Posterior cingulate gyrus (tissue), 11 donors: ENCODE measurements at regions of chr14 and their contacts with region 1.

Region 1: GRCh38 chr14:45253068-45253753 is at the start of gene MIS18BP1:
- DNase-seq: peak; percentile 69 to 98 (median 88)

Region 2: DNA sequence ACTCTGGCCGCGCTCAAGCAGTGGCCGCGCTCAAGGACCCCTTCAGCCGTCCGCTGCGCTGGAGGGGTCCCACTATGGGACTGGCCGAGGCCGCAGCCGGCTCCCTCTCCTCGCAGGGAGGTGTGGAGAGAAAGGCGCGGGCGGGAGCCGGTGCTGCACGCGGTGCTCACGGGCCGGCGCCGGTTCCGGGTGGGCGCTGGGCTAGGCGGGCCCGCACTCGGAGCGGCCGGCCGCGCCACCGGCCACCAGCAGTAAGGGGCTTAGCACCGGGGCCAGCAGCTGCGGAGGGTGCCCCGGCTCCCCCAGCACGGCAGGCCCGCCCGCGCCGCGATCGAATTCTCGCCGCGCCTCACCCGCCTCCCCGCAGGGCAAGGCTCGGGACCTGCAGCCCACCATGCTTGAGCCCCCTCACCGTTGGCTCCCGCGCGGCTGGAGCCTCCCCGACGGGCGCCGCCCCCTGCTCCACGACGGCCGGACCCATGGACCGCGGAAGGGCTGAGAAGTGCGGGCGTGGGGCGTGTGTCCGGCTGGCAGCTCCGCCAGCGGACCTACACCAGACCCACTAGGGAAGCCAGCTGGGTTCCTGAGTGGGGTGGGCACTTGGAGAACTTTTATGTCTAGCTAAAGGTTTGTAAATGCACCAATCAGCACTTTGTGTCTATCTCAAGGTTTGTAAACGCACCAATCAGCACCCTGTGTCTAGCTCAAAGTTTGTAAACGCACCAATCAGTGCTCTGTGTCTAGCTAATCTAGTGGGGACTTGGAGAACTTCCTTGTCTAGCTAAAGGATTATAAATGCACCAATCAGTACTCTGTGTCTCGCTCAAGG is 341.0 kb before region 1 on chr14:
- intact Hi-C with region 1: loop called (anchors 5 kb)
- DNase-seq: peak in 2 of 10 donors; percentile 74 to 80

Region 3: GRCh38 chr14:45083971-45084722 is 169.1 kb before region 1 on chr14 and contains the start of gene PRPF39:
- intact Hi-C with region 1: loop called (anchors 1 kb)
- DNase-seq: peak; percentile 87 to 99 (median 94)

Region 4: DNA sequence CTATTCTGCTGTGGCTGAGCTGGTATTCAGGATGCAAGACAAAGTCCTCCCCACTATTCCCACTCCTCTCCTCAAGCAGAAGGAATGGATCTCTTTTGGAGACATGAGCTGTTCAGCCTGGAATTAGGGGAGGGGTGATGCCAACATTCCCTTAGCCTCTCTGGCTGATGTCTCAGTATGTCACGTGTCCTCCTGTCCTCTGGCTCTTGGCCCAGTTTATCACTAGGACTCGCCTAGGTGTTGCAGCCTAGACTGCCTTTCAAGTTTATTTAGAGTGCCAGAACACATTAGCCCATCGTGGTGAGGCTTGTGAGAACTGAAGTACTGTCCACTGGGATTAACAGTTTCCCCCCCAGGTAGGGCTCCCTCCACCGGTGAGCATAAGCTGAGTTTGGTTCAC is 239.7 kb after region 1 on chr14:
- intact Hi-C with region 1: no loop called
- DNase-seq: no peak